ENCODE measurements at regions of chr12 and their contacts with region 1.

Region 1: GRCh38 chr12:48157018-48157888 is at the start of gene ASB8:
- DNase-seq: peak; percentile 99
- ATAC-seq: peak; percentile 99
- total RNA-seq, gene ASB8: 80.7 TPM

Region 2: GRCh38 chr12:47935184-47935583 is 222.1 kb before region 1 on chr12:
- intact Hi-C with region 1: no loop called
- DNase-seq: peak; percentile 78
- ATAC-seq: peak; percentile 82

Region 3: GRCh38 chr12:48105862-48106680 is 51.2 kb before region 1 on chr12 and contains the start of gene SENP1:
- intact Hi-C with region 1: loop called (anchors 1 kb)
- DNase-seq: peak; percentile 93
- ATAC-seq: peak; percentile 95
- total RNA-seq, gene SENP1: 7.7 TPM

Region 4: GRCh38 chr12:48119078-48119833 is 38.0 kb before region 1 on chr12 and contains the start of gene PFKM:
- intact Hi-C with region 1: loop called (anchors 2 kb)
- DNase-seq: peak; percentile 82
- ATAC-seq: peak; percentile 97
- total RNA-seq, gene PFKM: 637 TPM

Region 5: DNA sequence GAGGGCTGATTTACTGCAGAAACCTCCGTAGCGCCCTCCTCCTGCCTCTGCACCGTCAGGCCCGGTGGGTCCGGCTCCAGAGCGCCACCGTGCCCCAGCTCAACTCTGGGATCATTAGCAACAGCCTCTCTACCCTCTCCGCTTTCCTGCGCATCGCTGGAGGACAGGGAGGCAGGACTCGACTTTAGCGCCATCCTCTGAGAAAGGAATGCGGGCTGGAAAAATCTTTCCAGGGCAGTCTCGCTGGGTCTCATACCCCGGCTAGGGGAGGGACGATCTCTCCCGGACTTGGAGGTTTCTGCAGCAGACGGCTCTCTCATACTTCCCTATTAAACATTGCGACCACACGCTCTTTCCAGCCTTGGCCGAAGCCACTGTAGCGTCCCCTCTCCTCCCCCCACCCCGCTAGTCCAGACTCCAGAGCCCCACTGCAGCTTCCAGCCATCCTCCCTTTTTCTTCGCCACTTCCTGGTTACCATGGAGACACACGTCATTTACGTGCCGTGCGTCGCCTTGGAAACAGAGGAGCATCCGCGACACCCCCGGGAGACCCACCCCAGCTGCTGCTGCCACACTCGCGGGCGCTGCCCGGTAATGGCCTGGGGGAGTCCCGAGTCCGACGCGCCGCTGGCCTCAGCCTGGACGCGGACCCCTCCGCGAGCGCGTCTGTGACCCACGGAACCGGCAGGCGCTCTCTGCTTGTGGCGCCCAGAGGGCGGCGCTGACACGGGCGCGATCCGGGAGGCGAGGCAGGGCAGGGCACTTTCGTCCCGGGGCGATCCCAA is 26.0 kb after region 1 on chr12 and contains the start of gene CCDC184:
- intact Hi-C with region 1: no loop called
- DNase-seq: peak; percentile 83
- ATAC-seq: peak; percentile 81
- total RNA-seq, gene CCDC184: 1.0 TPM